CD8-positive, alpha-beta memory T cell (primary cell): ENCODE measurements at regions of chr22 and their contacts with region 1.

Region 1: GRCh38 chr22:31630331-31631329 is 31.4 kb downstream of the PISD start:
- DNase-seq: peak; percentile 84 to 92 (median 89)
- H3K4me3 ChIP-seq: peak overlapping the region; percentile 66
- H3K4me3 Mint-ChIP-seq: peak overlapping the region; percentile 84 to 95 (median 88)
- H3K27ac ChIP-seq: peak overlapping the region; percentile 75
- H3K27ac Mint-ChIP-seq: peak overlapping the region; percentile 63 to 97 (median 94)
- H3K4me1 ChIP-seq: peaks cover 39% of the 10 kb centered on the region
- H3K4me1 Mint-ChIP-seq: peaks cover 22 to 57% (median 36%) of the 10 kb centered on the region in 3 donors
- H3K27me3 ChIP-seq: no peaks in the 10 kb centered on the region
- H3K27me3 Mint-ChIP-seq: no peaks in the 10 kb centered on the region

Region 2: GRCh38 chr22:31556627-31557203 is 73.9 kb before region 1 on chr22:
- CTCF ChIA-PET with region 1: interaction called, 12 read pairs
- POLR2A ChIA-PET with region 1: no interaction called
- DNase-seq: peak in 2 of 5 donors; percentile 13 to 14
- H3K4me3 ChIP-seq: no peak overlapping the region
- H3K4me3 Mint-ChIP-seq: no peak overlapping the region
- H3K27ac ChIP-seq: no peak overlapping the region
- H3K27ac Mint-ChIP-seq: peak overlapping the region in 5 of 8 donors; percentile 23 to 68 (median 33)
- H3K4me1 ChIP-seq: no peaks in the 10 kb centered on the region
- H3K4me1 Mint-ChIP-seq: peaks cover 14 to 22% (median 19%) of the 10 kb centered on the region in 3 donors
- H3K27me3 ChIP-seq: no peaks in the 10 kb centered on the region
- H3K27me3 Mint-ChIP-seq: no peaks in the 10 kb centered on the region